ENCODE measurements at regions of chr16 and their contacts with region 1.

Region 1: DNA sequence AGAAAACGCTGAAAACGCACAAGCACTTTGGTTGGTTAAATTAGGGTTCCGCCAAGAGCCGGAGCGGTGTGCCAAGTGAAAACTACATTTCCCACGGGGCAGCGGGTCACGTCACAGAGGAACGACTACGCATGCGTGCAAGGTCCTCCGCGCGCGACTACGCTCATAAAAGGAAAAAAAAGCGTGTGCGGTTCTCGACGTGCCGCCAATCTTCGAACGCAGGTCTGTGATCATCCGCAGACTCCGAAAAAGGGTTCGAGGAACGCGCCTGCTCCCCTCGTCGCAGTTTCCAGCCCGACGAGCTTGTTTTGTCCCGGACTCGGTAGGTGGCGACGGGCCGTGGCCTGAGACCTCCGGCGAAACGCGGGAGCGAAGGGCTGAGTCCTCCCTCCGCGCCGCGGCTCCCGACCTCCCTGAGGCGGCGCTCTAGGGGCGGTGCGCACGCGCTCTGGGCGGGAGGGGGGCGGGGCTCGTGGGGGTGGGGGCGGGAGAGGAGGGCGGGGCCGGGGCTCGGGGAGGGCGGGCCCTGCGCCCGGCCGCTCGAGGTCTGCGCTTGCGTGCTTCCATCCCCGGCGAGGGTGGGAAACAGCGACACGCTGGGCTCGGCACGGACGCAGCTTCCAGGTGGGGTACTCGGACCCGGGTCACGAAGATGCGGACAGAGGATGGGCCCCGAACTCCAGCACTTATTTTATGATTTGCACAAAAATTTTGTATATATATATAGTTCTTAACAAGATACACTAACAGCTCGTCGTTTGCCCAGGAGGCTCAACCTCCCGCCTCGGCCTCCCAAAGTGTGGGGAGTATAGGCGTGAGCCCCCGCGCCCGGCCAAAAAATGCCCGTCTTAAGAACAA is at the start of gene SGF29:
- DNase-seq: peak; percentile 97
- ATAC-seq: peak; percentile 85
- H3K4me3 Mint-ChIP-seq: peak within 1 kb of the TSS; percentile 87
- H3K27ac Mint-ChIP-seq: peak within 1 kb of the TSS; percentile 97
- H3K4me1 Mint-ChIP-seq: peaks cover 44% of the 10 kb centered on the region
- H3K27me3 Mint-ChIP-seq: no peaks in the 10 kb centered on the region
- total RNA-seq, gene SGF29: 23.6 to 35.5 TPM

Region 2: GRCh38 chr16:28053461-28053860 is 500.5 kb before region 1 on chr16:
- CTCF ChIA-PET with region 1: no interaction called
- POLR2A ChIA-PET with region 1: no interaction called
- intact Hi-C with region 1: no loop called
- DNase-seq: no peak
- ATAC-seq: no peak
- H3K4me3 Mint-ChIP-seq: no peak overlapping the region
- H3K27ac Mint-ChIP-seq: no peak overlapping the region
- H3K4me1 Mint-ChIP-seq: no peaks in the 10 kb centered on the region
- H3K27me3 Mint-ChIP-seq: peaks cover 21% of the 10 kb centered on the region

Region 3: GRCh38 chr16:28193530-28194423 is 360.2 kb before region 1 on chr16:
- CTCF ChIA-PET with region 1: no interaction called
- POLR2A ChIA-PET with region 1: no interaction called
- intact Hi-C with region 1: loop called in 1 of 2 experiments (anchors 5 kb)
- DNase-seq: peak; percentile 78
- ATAC-seq: peak; percentile 67
- H3K4me3 Mint-ChIP-seq: peak overlapping the region; percentile 66
- H3K27ac Mint-ChIP-seq: peak overlapping the region; percentile 92
- H3K4me1 Mint-ChIP-seq: peaks cover 81% of the 10 kb centered on the region
- H3K27me3 Mint-ChIP-seq: no peaks in the 10 kb centered on the region

Region 4: GRCh38 chr16:28277537-28278388 is 276.2 kb before region 1 on chr16:
- CTCF ChIA-PET with region 1: no interaction called
- POLR2A ChIA-PET with region 1: no interaction called
- intact Hi-C with region 1: loop called in 1 of 2 experiments (anchors 5 kb)
- DNase-seq: peak; percentile 91
- ATAC-seq: peak; percentile 85
- H3K4me3 Mint-ChIP-seq: peak overlapping the region; percentile 60
- H3K27ac Mint-ChIP-seq: peak overlapping the region; percentile 38
- H3K4me1 Mint-ChIP-seq: peaks cover 35% of the 10 kb centered on the region
- H3K27me3 Mint-ChIP-seq: peaks cover 4% of the 10 kb centered on the region

Region 5: DNA sequence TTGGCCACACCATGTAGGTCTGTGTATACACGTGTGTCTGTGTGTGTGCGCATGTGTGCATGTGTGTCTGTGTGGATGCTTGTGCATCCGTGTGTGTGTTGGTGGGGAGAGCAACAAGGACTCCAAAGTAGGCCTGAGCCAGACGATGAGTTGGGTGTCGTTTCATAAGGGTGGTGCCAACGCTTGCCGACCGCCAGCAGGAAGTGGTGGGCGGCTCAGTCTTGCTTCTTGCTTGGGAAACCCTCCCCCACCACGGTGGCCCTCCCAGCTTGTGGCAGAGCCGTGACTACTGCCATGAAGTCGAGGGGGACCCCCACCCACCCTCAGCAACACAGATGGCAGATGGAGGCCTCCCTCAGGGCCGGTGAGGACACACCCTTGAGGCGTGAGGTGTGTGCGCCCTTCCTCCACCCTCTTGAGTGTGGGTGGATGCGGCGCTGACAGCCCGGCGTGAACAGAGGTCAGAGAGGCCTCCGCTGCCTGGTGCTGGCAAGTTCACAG is 244.1 kb before region 1 on chr16:
- CTCF ChIA-PET with region 1: interaction called, 3 read pairs
- POLR2A ChIA-PET with region 1: no interaction called
- intact Hi-C with region 1: loop called in 1 of 2 experiments (anchors 5 kb)
- DNase-seq: peak; percentile 92
- ATAC-seq: peak; percentile 91
- H3K4me3 Mint-ChIP-seq: peak overlapping the region; percentile 6
- H3K27ac Mint-ChIP-seq: peak overlapping the region; percentile 91
- H3K4me1 Mint-ChIP-seq: peaks cover 48% of the 10 kb centered on the region
- H3K27me3 Mint-ChIP-seq: no peaks in the 10 kb centered on the region

Region 6: DNA sequence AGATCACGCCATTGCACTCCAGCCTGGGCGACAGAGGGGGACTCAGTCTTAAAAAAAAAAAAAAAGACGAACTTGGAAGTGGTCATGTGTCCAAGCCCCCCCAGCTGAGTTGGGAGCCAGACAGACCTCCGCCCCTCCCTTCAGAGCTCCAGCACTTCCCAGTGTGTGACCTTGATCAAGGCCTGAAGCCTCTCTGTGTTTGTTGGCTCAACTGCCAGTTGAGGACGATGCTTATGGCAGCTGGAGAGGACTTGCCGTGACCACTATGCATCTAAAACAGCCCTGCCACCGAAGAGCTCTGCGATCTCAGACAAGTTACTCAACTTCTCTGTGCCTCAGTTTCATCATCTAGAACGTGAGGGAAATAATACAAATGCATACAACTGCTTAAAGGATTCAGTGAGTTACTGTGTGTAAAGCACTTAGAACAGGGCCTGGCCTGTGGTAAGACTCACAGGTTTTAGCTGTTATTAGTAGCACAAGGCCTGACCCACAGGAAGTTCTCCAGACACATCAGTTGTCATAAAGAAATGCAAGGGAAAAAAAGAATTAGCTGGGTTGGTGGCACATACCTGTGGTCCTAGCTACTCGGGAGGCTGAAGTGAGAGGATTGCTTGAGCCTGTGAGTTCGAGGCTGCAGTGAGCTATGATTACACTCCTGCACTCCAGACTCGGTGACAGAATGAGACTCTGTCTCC is 40.4 kb before region 1 on chr16:
- CTCF ChIA-PET with region 1: no interaction called
- POLR2A ChIA-PET with region 1: no interaction called
- intact Hi-C with region 1: no loop called
- DNase-seq: no peak
- ATAC-seq: no peak
- H3K4me3 Mint-ChIP-seq: no peak overlapping the region
- H3K27ac Mint-ChIP-seq: no peak overlapping the region
- H3K4me1 Mint-ChIP-seq: no peaks in the 10 kb centered on the region
- H3K27me3 Mint-ChIP-seq: no peaks in the 10 kb centered on the region

Region 7: DNA sequence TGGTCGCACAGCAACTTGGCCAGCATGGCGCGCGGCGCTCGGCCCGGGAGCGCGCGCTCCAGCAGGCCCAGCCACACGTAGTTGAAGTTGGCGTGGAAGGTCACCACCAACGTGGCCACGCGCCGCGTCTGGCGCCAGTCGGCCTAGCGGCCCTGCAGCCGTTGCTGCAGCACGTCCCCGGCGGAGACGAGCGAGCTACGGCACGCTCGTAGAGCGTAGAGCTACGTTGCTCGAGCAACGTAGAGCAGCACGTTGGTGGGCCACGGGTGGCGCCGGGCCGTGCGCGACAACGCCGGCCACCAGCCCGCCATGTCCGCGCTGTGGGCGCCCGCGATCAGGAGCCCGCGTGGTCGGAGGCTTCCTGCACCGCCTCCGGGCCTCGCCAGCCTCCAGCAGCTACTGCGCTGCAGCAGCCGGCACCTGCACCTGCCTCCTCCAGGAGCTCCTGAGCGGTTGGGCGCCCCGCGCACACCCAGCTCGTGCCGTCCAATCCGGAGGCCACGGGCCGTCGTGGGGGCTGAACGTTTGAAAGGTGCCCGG is 69.2 kb after region 1 on chr16:
- CTCF ChIA-PET with region 1: no interaction called
- POLR2A ChIA-PET with region 1: no interaction called
- intact Hi-C with region 1: loop called in 1 of 2 experiments (anchors 5 kb)
- DNase-seq: peak; percentile 81
- ATAC-seq: peak; percentile 94
- H3K4me3 Mint-ChIP-seq: peak overlapping the region; percentile 77
- H3K27ac Mint-ChIP-seq: peak overlapping the region; percentile 88
- H3K4me1 Mint-ChIP-seq: peaks cover 16% of the 10 kb centered on the region
- H3K27me3 Mint-ChIP-seq: no peaks in the 10 kb centered on the region

Region 8: GRCh38 chr16:28863929-28864793 is 310.2 kb after region 1 on chr16:
- CTCF ChIA-PET with region 1: no interaction called
- POLR2A ChIA-PET with region 1: no interaction called
- intact Hi-C with region 1: loop called in 1 of 2 experiments (anchors 1 kb)
- DNase-seq: peak; percentile 44
- ATAC-seq: no peak
- H3K4me3 Mint-ChIP-seq: peak overlapping the region; percentile 96
- H3K27ac Mint-ChIP-seq: peak overlapping the region; percentile 96
- H3K4me1 Mint-ChIP-seq: peaks cover 21% of the 10 kb centered on the region
- H3K27me3 Mint-ChIP-seq: no peaks in the 10 kb centered on the region

Region 9: DNA sequence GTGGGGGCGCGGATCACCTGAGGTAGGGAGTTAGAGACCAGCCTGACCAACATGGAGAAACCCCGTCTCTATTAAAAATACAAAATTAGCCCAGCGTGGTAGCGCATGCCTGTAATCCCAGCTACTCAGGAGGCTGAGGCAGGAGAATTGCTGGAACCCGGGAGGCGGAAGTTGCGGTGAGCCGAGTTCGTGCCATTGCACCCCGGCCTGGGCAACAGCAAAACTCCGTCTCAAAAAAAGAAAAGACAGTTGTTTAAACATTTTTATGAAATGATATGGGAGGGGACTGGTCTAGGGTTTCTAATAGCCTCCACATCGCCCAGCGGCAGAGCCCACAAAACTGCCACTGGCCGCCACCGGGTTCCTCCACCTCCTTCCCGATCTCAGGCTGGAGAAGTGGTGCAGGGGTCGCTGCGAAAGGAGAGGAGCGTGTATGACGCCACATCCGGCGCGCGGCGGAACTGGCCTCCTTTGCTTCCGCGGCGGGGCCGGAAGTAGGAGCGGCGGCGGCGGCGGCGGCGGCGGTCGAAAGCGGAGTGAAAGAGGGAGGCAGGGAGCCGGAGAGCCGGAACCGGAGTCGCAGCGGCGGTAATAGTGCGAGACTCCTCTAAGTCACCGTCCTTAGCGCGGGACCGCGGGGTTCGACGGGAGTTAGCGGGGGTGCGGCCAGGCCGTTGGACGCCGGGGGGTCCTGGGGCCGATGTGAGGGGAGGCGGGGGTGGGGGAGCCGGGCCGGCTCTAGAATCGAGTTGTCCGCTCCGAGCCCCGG is 1521.7 kb after region 1 on chr16 and contains the start of gene PPP4C:
- CTCF ChIA-PET with region 1: no interaction called
- POLR2A ChIA-PET with region 1: no interaction called
- intact Hi-C with region 1: loop called in 1 of 2 experiments (anchors 5 kb)
- DNase-seq: peak; percentile 96
- ATAC-seq: peak; percentile 82
- H3K4me3 Mint-ChIP-seq: peak within 1 kb of the TSS; percentile 89
- H3K27ac Mint-ChIP-seq: peak within 1 kb of the TSS; percentile 91
- H3K4me1 Mint-ChIP-seq: peaks cover 26% of the 10 kb centered on the region
- H3K27me3 Mint-ChIP-seq: no peaks in the 10 kb centered on the region
- total RNA-seq, gene PPP4C: 106 to 113 TPM

Measured in activated CD4-positive, alpha-beta T cell treated with anti-CD3 and anti-CD28 coated beads for 36 hours (primary cell).